ENCODE measurements at regions of chr4 and their contacts with region 1.

Region 1: GRCh38 chr4:94701631-94702300 is 56.0 kb upstream of the BMPR1B start:
- DNase-seq: no peak
- H3K4me3 ChIP-seq: no peak overlapping the region
- H3K27me3 ChIP-seq: no peaks in the 10 kb centered on the region
- CTCF ChIP-seq: no peak

Region 2: GRCh38 chr4:94641702-94642560 is 59.8 kb before region 1 on chr4:
- CTCF ChIA-PET with region 1: no interaction called
- POLR2A ChIA-PET with region 1: interaction called, 14 read pairs
- DNase-seq: no peak
- H3K4me3 ChIP-seq: no peak overlapping the region
- H3K27me3 ChIP-seq: no peaks in the 10 kb centered on the region
- CTCF ChIP-seq: no peak

Region 3: DNA sequence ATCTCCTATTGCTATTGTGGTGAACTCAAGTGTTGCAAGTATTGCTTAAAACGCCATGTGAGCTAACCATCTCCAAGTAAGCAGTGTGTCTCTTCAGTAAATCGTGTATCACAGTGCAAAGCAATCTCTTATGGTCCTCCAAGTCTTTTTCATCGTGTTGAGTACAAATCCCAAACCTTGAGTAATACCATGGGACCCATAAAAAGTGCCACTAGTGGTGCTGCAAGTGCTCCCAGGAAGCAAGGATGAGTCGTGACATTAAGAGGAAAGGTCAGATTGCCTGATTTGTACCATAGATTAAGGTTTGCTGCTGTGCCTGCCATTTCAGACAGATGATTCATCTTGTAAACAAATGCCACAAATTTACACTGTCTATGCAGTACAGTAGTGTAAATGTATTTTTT is 10.9 kb before region 1 on chr4:
- CTCF ChIA-PET with region 1: interaction called, 10 read pairs
- POLR2A ChIA-PET with region 1: no interaction called
- DNase-seq: no peak
- H3K4me3 ChIP-seq: no peak overlapping the region
- H3K27me3 ChIP-seq: no peaks in the 10 kb centered on the region
- CTCF ChIP-seq: no peak

Region 4: DNA sequence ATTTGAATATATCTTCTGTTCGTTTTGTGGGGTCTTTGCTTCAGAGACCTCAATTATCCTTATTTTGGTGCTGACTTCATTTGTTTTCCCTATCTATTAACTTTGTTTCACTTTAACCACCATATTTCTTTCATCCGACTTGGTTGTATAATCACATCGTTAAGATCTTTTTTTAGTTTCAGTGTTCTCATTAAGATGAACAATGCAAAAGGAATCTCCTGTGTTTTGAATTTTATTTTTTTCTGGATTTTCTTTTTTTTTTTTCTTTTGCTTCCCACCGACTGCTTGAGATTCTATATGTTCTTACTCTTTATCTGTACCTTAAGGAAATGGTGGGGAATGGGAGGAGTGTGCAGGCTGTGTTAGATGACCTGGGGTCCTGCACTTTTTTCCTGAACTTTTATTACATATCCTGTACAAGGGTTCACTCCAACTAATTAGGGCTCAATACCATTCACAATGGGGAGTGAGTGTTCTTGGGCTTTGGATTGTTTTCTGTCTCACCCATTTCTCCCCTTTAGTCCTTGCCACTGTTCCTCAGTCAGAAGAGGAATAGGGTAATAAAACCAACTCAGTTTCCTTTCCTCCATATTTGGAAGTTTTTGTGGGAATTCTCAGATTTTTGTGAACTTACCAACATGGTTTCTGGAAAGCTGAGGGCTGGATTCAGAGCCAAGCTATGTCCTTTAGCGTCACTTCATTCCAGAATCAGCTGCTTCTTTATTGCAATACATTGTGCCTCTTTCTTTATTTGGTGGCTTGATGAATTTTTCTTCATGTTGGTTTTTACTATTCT is 12.8 kb after region 1 on chr4:
- CTCF ChIA-PET with region 1: no interaction called
- POLR2A ChIA-PET with region 1: no interaction called
- DNase-seq: peak; percentile 91
- H3K4me3 ChIP-seq: no peak overlapping the region
- H3K27me3 ChIP-seq: no peaks in the 10 kb centered on the region
- CTCF ChIP-seq: no peak